Activated naive CD4-positive, alpha-beta T cell treated with anti-CD3 and anti-CD28 coated beads for 36 hours (primary cell): ENCODE measurements at regions of chrX and their contacts with region 1.

Region 1: DNA sequence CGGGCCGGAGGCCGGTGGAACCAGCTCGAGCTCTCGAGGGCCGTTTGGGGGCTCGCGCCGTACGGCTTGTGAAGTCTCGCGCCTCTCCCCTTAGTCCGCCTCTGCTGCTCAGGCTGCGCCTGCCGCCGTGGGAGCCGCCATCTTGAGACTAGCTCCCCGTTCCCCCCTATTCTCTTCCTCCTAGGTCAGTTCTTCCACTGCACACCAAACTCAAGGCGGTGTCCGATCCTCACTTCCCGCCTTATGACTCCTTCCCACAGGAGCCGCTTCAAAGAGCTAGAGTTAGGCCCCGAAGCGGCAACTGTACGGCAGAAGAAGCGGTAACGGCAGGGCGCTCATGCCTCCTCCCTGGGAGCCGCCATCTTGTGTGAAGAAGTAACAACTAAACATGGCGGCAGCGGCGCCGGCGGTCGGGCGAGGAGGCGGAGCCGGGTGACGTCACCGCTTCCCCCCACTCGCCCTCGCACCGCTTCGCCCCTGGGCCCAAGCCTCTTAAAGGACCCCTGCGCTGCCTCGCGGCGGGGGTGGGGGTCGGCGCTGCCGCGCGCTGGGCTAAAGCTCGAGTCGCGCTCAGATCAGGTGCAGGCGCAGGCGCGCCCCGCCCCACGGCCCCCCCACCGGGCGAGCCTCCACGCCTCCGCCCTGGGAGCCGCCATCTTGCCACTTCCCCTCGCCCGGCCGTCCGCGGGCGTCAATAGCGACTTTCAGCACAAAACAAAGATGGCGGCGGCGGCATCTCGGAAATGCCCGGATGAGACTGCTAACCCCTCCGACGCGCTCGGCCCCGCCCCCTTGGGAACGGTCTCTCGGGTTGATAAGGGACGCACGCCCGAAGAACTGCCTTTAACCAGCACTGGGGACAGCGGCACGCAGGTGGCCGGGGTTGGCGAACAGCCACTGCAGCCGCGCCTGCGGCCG is at the start of gene HCFC1:
- DNase-seq: peak; percentile 91
- H3K4me3 Mint-ChIP-seq: peak within 1 kb of the TSS; percentile 100
- H3K27ac Mint-ChIP-seq: peak within 1 kb of the TSS; percentile 100
- H3K4me1 Mint-ChIP-seq: peaks cover 31% of the 10 kb centered on the region
- H3K27me3 Mint-ChIP-seq: no peaks in the 10 kb centered on the region
- total RNA-seq, gene HCFC1: 85.0 to 86.1 TPM

Region 2: DNA sequence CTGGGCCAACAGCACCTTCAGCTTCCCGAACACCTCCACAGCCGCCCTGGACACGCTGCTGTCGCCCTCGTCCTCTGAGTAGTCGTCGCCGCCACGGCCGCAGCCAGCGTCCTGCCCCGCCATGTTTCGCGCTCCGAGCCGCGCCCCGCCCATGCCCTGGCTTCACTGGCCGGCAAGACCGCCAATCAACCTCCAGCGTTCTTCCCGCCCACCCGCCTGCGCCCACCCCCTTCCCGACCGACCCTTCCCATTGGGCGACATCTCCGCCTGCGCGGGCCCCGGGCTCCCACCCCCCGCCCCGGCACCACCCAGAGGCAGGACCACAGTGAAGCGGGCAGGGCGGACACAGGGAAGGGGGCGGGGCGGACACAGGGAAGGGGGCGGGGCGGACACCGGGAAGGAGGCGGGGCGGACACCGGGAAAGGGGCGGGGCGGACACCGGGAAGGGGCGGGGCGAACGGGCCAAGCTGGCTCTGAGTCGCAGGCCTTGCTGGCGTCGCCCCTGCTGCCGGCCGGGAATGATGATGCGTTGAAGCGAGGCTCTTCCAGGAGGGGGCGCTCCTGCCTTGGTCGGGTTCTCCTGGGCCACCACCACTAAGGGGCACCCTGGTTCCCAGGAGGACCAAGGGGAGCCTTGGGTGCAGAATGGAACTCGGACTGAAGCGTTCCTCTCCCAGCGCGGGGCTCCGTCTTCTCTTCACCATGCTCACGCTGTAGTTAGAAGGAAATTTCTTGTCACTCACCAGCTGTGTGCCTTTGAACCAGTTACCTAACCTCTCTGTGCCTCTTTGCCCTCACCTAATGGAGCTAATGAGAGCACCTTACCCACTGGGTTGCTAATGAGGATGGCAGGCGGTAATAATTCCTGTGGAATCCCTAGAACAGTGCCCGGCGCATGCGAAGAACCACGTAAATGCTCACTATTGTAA is 501.0 kb before region 1 on chrX and contains the start of gene HAUS7:
- CTCF ChIA-PET with region 1: no interaction called
- intact Hi-C with region 1: loop called (anchors 5 kb)
- DNase-seq: peak; percentile 93
- H3K4me3 Mint-ChIP-seq: peak within 1 kb of the TSS; percentile 78
- H3K27ac Mint-ChIP-seq: peak within 1 kb of the TSS; percentile 77
- H3K4me1 Mint-ChIP-seq: peaks cover 15% of the 10 kb centered on the region
- H3K27me3 Mint-ChIP-seq: no peaks in the 10 kb centered on the region
- total RNA-seq, gene HAUS7: 63.5 to 68.5 TPM

Region 3: GRCh38 chrX:153794018-153794896 is 177.5 kb before region 1 on chrX and contains the starts of genes IDH3G and SSR4:
- CTCF ChIA-PET with region 1: no interaction called
- intact Hi-C with region 1: loop called (anchors 1 kb)
- DNase-seq: peak; percentile 94
- H3K4me3 Mint-ChIP-seq: peak within 1 kb of the TSS; percentile 94
- H3K27ac Mint-ChIP-seq: peak within 1 kb of the TSS; percentile 87
- H3K4me1 Mint-ChIP-seq: peaks cover 29% of the 10 kb centered on the region
- H3K27me3 Mint-ChIP-seq: no peaks in the 10 kb centered on the region
- total RNA-seq, gene IDH3G: 46.3 to 49.9 TPM
- total RNA-seq, gene SSR4: 148 to 152 TPM

Region 4: GRCh38 chrX:153947009-153947769 is 24.5 kb before region 1 on chrX:
- CTCF ChIA-PET with region 1: interaction called, 32 read pairs
- intact Hi-C with region 1: loop called (anchors 1 kb)
- DNase-seq: peak; percentile 87
- H3K4me3 Mint-ChIP-seq: no peak overlapping the region
- H3K27ac Mint-ChIP-seq: peak overlapping the region; percentile 76
- H3K4me1 Mint-ChIP-seq: peaks cover 28% of the 10 kb centered on the region
- H3K27me3 Mint-ChIP-seq: no peaks in the 10 kb centered on the region

Region 5: GRCh38 chrX:154051201-154051810 is 79.6 kb after region 1 on chrX:
- CTCF ChIA-PET with region 1: interaction called, 3 read pairs
- intact Hi-C with region 1: loop called (anchors 2 kb)
- DNase-seq: peak; percentile 81
- H3K4me3 Mint-ChIP-seq: no peak overlapping the region
- H3K27ac Mint-ChIP-seq: peak overlapping the region; percentile 39
- H3K4me1 Mint-ChIP-seq: peaks cover 32% of the 10 kb centered on the region
- H3K27me3 Mint-ChIP-seq: no peaks in the 10 kb centered on the region

Region 6: GRCh38 chrX:154370882-154371770 is 399.4 kb after region 1 on chrX:
- CTCF ChIA-PET with region 1: no interaction called
- intact Hi-C with region 1: loop called (anchors 1 kb)
- DNase-seq: peak; percentile 95
- H3K4me3 Mint-ChIP-seq: peak overlapping the region; percentile 76
- H3K27ac Mint-ChIP-seq: peak overlapping the region; percentile 56
- H3K4me1 Mint-ChIP-seq: peaks cover 22% of the 10 kb centered on the region
- H3K27me3 Mint-ChIP-seq: no peaks in the 10 kb centered on the region

Region 7: GRCh38 chrX:154478728-154479622 is 507.3 kb after region 1 on chrX and contains the start of gene LAGE3:
- CTCF ChIA-PET with region 1: no interaction called
- intact Hi-C with region 1: loop called (anchors 5 kb)
- DNase-seq: peak; percentile 95
- H3K4me3 Mint-ChIP-seq: peak within 1 kb of the TSS; percentile 83
- H3K27ac Mint-ChIP-seq: peak within 1 kb of the TSS; percentile 94
- H3K4me1 Mint-ChIP-seq: peaks cover 30% of the 10 kb centered on the region
- H3K27me3 Mint-ChIP-seq: no peaks in the 10 kb centered on the region
- total RNA-seq, gene LAGE3: 42.3 to 42.8 TPM